Common myeloid progenitor, CD34-positive (primary cell): ENCODE measurements at regions of chr7 and their contacts with region 1.

Region 1: DNA sequence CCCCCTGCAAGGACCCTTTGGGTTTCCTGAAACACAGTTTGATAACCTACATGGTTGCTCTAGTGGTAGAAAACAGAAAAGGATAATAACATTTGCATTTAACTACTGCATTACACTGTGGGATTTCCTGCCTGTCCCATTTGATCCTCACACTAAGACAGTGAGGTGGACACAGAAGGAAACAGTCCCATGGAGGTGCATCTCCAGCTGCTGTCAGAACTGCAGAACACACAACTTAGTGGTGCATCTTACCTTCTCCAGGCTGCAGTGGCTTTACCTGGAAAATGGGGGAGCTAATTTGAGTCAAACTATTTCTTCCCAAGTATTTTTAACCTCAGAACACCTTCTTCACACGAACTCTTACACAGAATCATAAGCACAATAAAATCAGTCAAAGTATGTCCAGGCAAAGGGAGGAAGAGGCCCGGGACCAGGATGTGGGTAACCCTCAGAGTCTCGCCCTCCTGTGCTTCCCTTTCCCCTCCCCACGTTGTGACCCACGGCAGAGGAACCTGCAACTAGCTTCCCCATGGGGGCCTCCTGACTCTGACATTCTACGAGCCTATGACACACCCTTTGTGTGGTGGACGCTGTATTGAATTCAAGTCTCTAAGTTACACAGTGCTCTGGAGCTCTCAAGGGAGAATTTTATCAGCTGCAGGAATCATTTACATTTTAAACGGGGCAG is 33.7 kb downstream of the SCRN1 start:
- DNase-seq: peak; percentile 60 to 92 (median 90)
- H3K4me3 ChIP-seq: peak overlapping the region in 3 of 7 experiments; percentile 20 to 53 (median 35)
- H3K27ac ChIP-seq: no peak overlapping the region
- H3K4me1 ChIP-seq: peaks cover 10 to 22% (median 17%) of the 10 kb centered on the region in 4 experiments
- H3K27me3 ChIP-seq: no peaks in the 10 kb centered on the region

Region 2: GRCh38 chr7:30026229-30027064 is 70.5 kb after region 1 on chr7 and contains the start of gene FKBP14:
- CTCF ChIA-PET with region 1: interaction called, 18 read pairs
- POLR2A ChIA-PET with region 1: no interaction called
- DNase-seq: peak; percentile 98 to 99 (median 99)
- H3K4me3 ChIP-seq: peak within 1 kb of the TSS; percentile 69 to 99 (median 93)
- H3K27ac ChIP-seq: peak within 1 kb of the TSS; percentile 81 to 89
- H3K4me1 ChIP-seq: peaks cover 12 to 40% (median 33%) of the 10 kb centered on the region in 4 experiments
- H3K27me3 ChIP-seq: no peaks in the 10 kb centered on the region